ENCODE measurements at regions of chr10 and their contacts with region 1.

Region 1: DNA sequence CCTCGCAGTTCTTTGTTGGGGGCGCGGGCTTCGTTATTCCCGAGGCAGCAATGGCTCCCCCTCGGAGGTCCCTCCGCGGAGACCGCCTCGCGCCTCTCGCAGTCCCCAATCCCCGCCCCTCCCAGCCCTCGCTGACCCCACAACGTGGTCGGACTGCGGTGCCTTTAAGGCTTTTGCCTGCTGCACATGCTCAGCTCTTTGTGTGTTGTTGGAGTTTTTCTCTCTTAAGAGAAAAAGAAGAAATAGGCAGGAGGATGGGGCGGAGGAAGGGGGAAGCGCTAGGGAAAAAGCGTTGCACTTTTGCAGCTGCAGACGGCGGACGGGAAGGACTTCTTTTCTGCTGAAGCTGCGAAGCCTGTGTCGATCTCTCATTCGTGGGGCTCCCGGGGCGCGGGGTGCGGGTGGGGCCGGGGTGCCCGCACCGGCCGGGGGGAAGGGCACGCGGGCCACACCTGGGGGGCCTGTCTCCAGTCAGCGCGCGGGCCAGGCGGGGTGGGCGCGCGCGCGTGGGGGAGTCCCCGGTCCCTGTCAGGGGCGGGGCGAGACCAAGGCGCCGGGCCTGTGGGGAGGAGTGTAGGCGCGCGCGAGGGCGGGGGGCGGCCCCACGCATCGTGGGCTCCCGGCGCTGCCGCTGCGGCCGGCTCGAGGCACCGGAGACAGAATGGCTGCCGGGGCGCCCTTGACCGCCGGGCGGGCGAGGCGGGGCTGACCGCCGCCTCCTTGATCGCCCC is 445 bp upstream of the ATRNL1 start:
- DNase-seq: peak; percentile 51
- H3K4me3 ChIP-seq: peak overlapping the region; percentile 70
- H3K27ac ChIP-seq: peak overlapping the region; percentile 55
- H3K27me3 ChIP-seq: no peaks in the 10 kb centered on the region
- CTCF ChIP-seq: no peak

Region 2: DNA sequence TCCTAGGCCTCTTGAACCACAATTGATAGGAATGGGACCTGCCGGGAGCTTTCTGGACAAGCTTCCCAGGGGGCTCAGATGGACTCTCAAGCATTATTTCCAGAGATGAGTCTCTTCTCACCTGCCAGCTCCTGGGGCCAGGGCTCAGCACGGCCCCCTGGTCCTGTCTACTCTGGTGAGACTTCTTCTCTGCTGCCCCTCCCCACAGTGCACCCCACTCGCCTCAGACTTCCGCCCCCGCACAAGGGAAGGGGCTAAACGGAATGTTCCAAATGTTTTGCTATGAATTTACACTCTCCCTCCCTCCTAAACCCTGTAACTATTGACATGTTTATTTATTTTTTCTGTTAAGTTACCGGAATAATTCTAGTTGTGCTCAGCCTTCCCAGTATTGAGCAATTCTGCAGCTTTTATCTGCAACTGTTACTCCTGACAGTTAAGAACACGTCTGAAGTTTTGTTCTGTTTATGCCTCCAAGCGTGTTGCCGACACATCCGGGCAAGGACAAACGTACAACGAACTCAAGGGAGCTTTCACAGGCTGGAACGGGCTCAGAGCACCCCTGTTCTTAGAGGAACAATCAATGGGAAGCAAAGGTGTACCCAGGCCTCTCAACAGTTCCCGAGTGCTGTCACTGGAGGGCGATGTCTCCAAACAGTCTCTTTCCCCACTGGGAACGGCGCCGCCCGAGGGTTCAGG is 216.0 kb before region 1 on chr10:
- in situ Hi-C with region 1: loop called (anchors 25 kb)
- DNase-seq: peak; percentile 72
- H3K4me3 ChIP-seq: no peak overlapping the region
- H3K27ac ChIP-seq: no peak overlapping the region
- H3K27me3 ChIP-seq: no peaks in the 10 kb centered on the region
- CTCF ChIP-seq: peak; percentile 93

Measured in brain microvascular endothelial cell (primary cell).